ENCODE measurements at regions of chr1 and their contacts with region 1.

Region 1: DNA sequence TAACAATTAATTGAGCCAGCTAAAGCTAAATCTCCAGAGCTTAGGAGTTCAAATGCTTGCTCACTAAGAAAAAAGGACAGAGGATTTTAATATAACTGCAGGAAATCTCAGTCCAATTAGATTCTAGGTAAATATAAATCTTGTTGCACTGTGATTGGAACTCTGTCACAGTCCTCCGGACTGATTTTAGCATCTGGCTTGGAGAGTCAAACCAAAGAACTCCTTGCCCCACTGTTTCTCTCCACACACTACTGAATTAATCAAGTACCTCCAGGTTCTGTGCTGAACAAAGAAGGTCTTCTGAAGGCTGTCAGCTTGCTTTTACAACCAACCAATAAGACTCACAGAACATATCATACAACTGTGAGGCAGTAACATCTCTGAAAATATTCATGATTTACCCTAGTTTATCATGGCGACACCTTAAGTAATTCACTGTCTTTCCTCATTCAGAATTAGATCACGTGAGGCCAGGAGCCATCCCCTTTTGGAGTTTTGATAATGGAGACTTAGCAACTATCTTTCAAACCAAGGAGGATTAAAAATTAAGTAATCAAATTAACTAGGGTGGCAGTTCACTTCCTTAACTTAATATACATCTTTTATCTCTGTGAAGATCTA is 176.0 kb downstream of the RERE start:
- DNase-seq: no peak
- CTCF ChIP-seq: no peak

Region 2: DNA sequence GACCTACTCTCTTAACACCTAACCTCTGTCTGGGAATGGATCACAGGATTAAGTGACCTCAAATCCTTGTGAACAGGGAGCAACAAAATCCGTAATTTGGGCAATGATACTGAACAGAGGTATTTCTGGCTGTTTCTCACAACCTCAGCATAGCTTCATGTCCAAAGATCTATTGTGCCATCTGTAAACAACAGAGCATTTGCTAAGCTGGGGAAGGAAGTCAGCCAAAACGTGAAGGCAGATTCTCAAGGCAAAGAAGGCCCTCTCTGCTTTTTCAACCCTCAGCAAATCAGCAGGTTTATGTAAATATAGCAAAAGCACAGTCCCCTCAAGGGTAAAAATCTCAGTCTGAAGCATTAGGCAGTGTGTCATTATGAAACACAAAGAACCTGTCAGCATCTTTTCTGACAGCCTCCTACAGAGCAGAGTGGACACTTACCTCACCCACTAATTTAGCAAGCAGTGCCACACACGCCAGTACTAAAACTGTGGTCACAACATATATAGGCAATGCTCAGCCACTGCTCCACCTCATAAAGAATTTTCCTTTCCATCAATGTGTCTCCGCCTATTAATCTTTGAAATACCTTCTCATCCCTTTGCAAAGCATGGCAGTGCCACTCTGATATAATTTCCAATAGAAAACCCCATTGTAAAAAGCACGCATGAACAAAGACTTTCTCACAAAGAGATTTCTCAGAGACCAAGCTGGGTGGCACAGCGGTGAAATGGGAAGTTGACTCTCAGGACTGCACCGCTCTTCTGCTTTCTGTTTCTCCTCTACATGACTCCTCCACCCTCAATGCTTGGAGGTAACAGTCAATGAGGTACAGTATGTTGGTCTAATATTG is 12.0 kb before region 1 on chr1:
- CTCF ChIA-PET with region 1: interaction called, 11 read pairs
- POLR2A ChIA-PET with region 1: no interaction called
- DNase-seq: peak; percentile 70
- CTCF ChIP-seq: no peak

Measured in GM10248 (cell line).